ENCODE measurements at regions of chr12 and their contacts with region 1.

Region 1: GRCh38 chr12:53267999-53268647 is at the start of gene ESPL1:
- DNase-seq: peak; percentile 58
- ATAC-seq: peak; percentile 93
- H3K4me3 ChIP-seq: peak within 1 kb of the TSS; percentile 77
- H3K27ac ChIP-seq: peak within 1 kb of the TSS; percentile 89
- H3K4me1 ChIP-seq: peaks cover 14% of the 10 kb centered on the region
- H3K27me3 ChIP-seq: no peaks in the 10 kb centered on the region
- CTCF ChIP-seq: peak; percentile 26 to 37 (median 33); a peak in 4 of 6 replicates
- EP300 ChIP-seq: no peak
- POLR2A ChIP-seq: peak; percentile 75
- RAD21 ChIP-seq: peak; percentile 47
- polyA plus RNA-seq, gene ESPL1: 2.1 to 2.2 TPM

Region 2: DNA sequence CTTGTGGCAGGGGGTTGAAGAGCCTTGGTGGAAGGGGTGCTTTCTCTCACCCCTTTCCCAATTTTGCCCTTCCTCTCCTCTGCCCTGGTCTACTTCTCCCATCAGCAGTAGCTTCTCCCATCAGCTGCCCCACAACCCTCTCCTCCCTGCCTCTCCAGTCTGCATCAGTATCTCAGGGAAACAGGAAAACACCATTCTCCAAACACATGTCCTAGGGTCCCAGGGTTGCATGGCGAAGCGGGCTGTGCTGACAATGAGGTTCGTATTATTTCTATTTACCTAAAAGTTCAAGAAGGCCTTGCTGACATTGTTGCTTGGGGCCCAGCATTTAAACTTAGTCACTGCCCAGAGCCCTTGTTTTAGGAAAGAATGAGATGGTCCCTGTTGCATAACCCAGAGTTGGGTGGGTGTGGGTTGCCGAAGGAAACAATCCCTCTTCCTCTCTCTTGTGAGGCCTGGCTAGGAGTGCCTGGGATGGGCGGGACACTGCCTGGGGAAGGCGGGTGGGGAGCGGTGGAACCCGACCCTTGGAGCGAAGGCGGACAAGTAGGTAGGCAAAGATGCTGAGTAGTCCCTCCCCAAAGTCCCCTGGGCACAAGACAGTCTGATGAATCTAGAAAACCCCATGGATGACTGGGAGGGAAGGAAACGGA is 171.9 kb before region 1 on chr12:
- CTCF ChIA-PET with region 1: no interaction called
- POLR2A ChIA-PET with region 1: no interaction called
- RAD21 ChIA-PET with region 1: no interaction called
- SMC1A ChIA-PET with region 1: no interaction called
- in situ Hi-C with region 1: no loop called
- intact Hi-C with region 1: no loop called
- DNase-seq: no peak
- ATAC-seq: no peak
- H3K4me3 ChIP-seq: no peak overlapping the region
- H3K27ac ChIP-seq: no peak overlapping the region
- H3K4me1 ChIP-seq: peaks cover 9% of the 10 kb centered on the region
- H3K27me3 ChIP-seq: peaks cover 0 to 6% of the 10 kb centered on the region in 2 experiments; a peak in 3 of 4 replicates
- CTCF ChIP-seq: no peak
- EP300 ChIP-seq: no peak
- POLR2A ChIP-seq: no peak
- RAD21 ChIP-seq: no peak

Region 3: DNA sequence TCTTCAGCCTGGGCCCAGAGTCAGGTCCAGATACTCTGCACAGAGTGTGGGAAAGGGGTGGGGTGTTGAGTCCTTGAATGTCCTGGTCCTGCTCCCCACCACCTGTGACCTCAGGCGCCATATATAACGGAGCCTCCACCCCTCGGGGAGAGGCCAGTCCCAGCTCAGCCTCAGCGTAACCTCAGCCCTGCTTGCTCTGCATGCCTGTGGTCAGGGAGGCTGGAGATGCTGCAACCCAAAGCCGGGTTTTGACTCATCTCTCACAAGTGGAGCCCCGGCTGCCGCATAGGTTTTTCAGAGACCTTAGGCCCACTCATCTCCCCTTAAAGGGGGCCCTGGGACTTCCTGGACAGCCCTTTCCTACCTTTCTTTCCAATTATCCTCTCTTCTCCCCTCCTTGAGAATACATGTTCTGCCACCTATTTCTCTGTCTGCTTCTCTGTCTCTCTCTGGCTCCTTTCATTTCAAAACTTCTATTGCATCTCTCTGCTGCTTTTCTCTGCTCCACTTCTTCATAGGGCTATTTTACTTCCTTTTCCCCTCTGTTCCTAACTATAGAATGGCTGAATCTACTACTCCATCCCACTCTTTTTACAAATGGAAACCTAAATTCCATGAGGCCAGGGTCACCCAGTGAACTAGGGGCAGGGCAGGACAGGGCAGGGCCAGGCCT is 62.2 kb before region 1 on chr12:
- CTCF ChIA-PET with region 1: interaction called, 134 read pairs
- POLR2A ChIA-PET with region 1: interaction called, 16 read pairs
- RAD21 ChIA-PET with region 1: interaction called, 146 read pairs
- SMC1A ChIA-PET with region 1: interaction called, 155 read pairs
- in situ Hi-C with region 1: no loop called
- intact Hi-C with region 1: no loop called
- DNase-seq: peak; percentile 87
- ATAC-seq: peak; percentile 80
- H3K4me3 ChIP-seq: peak overlapping the region; percentile 90
- H3K27ac ChIP-seq: peak overlapping the region; percentile 86
- H3K4me1 ChIP-seq: peaks cover 54% of the 10 kb centered on the region
- H3K27me3 ChIP-seq: no peaks in the 10 kb centered on the region
- CTCF ChIP-seq: no peak
- EP300 ChIP-seq: peak; percentile 60 to 77; a peak in 2 of 4 replicates
- POLR2A ChIP-seq: peak; percentile 75
- RAD21 ChIP-seq: no peak

Region 4: DNA sequence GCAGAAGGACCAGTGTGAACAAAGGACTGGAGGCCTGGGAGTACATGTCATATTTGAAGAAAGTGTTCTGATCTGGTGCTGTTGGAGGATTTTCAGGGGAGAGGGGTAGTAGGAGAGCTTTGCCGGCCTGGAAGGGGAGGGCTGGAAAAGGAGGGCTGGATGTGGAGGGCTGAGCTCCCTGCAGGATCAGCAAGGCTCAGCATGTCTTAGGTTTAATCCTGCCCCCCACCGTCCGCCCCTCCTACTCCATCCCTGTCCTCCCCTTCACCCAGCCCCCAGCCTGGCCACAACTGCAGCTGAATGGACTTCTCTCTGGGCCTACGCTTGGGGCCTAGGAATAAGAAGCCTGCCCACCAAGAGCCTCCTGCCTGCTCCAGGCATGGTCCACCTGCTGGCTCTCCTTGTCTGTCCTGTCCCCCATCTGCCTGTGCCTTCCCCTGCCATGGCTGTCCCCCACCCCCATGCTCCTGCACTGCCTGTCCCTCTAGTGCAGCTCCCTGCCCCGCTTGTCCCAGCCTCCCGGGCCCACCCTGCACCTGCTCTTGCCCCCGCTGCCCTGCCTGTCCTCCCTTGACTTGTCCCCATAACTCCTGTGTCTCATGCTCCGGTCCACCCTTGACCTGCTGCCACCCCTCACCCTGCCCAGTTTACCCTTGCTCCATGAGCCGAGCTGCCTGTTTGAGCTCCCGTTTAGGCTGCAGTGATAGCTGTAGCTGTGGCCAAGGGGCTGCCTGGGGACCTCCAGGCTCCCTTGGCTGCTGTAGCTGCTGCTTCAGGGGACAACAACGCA is 26.3 kb before region 1 on chr12:
- CTCF ChIA-PET with region 1: interaction called, 5 read pairs
- POLR2A ChIA-PET with region 1: interaction called, 5 read pairs
- RAD21 ChIA-PET with region 1: interaction called, 4 read pairs
- SMC1A ChIA-PET with region 1: interaction called, 16 read pairs
- in situ Hi-C with region 1: no loop called
- intact Hi-C with region 1: no loop called
- DNase-seq: no peak
- ATAC-seq: peak; percentile 27; the same call in 2 of the 3 replicates
- H3K4me3 ChIP-seq: no peak overlapping the region
- H3K27ac ChIP-seq: no peak overlapping the region
- H3K4me1 ChIP-seq: peaks cover 6% of the 10 kb centered on the region
- H3K27me3 ChIP-seq: peaks cover 0 to 5% of the 10 kb centered on the region in 2 experiments; a peak in 2 of 4 replicates
- CTCF ChIP-seq: no peak
- EP300 ChIP-seq: no peak
- POLR2A ChIP-seq: no peak
- RAD21 ChIP-seq: no peak

Region 5: DNA sequence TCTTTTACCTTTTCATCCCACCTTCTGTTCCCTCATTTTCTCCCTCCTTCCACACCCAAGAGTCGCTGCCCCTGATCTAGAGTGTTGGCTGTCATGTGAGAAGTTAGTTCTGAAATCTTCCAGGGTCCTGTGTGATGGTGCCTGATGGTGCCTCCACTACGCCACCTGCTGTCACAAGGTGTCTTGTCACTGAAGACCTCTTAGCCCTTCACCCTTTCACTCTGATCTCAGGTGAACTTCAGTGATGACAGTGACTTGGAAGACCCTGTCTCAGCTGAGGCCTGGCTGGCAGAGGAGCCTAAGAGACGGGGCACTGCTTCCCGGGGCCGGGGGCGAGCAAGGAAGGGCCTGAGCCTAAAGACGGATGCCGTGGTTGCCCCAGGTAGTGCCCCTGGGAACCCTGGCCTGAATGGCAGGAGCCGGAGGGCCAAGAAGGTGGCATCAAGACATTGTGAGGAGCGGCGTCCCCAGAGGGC is 19.7 kb after region 1 on chr12:
- CTCF ChIA-PET with region 1: interaction called, 87 read pairs
- POLR2A ChIA-PET with region 1: no interaction called
- RAD21 ChIA-PET with region 1: interaction called, 5 read pairs
- SMC1A ChIA-PET with region 1: interaction called, 27 read pairs
- in situ Hi-C with region 1: no loop called
- intact Hi-C with region 1: no loop called
- DNase-seq: peak; percentile 17
- ATAC-seq: peak; percentile 99
- H3K4me3 ChIP-seq: no peak overlapping the region
- H3K27ac ChIP-seq: no peak overlapping the region
- H3K4me1 ChIP-seq: no peaks in the 10 kb centered on the region
- H3K27me3 ChIP-seq: no peaks in the 10 kb centered on the region
- CTCF ChIP-seq: peak; percentile 76 to 80 (median 78)
- EP300 ChIP-seq: no peak
- POLR2A ChIP-seq: no peak
- RAD21 ChIP-seq: peak; percentile 84

Region 6: DNA sequence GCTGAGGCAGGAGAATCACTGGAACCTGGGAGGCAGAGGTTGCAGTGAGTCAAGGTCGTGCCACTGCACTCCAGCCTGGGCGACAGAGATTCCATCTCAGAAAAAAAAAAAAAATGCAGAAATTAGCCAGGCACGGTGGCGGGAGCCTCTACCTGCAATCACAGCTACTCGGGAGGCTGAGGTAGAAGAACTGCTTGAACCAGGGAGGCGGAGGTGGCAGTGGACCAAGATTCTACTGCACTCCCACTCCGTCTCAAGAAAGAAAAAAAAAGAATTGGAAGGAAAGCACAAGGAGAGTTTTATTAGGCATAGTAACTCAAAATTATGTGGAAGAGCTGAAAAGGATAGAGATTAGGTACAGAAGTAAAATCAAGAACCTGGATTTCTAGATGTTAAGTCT is 134.7 kb after region 1 on chr12:
- CTCF ChIA-PET with region 1: no interaction called
- POLR2A ChIA-PET with region 1: no interaction called
- RAD21 ChIA-PET with region 1: no interaction called
- SMC1A ChIA-PET with region 1: no interaction called
- in situ Hi-C with region 1: no loop called
- intact Hi-C with region 1: no loop called
- DNase-seq: no peak
- ATAC-seq: no peak
- H3K4me3 ChIP-seq: no peak overlapping the region
- H3K27ac ChIP-seq: no peak overlapping the region
- H3K4me1 ChIP-seq: no peaks in the 10 kb centered on the region
- H3K27me3 ChIP-seq: no peaks in the 10 kb centered on the region
- CTCF ChIP-seq: no peak
- EP300 ChIP-seq: no peak
- POLR2A ChIP-seq: no peak
- RAD21 ChIP-seq: no peak

Region 7: DNA sequence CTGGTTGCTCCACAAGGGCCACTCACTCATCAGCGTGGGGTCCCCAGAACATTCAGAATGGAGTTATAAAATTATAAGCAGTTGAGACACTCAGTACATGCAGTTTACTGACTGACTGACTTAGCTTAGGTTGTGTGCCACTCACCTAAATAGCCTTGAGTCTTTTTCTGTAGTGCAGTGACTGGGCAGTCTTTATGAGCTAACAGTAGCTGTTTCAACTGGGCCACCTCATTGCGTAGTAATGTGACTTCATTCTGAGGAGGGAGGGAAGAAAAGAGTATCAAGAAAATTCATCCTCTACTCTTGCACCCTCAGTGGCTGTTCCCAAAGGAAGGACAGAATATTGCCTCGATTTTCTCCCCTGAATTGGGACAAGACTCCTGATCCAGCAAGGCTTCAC is 255.0 kb after region 1 on chr12:
- CTCF ChIA-PET with region 1: no interaction called
- POLR2A ChIA-PET with region 1: no interaction called
- RAD21 ChIA-PET with region 1: no interaction called
- SMC1A ChIA-PET with region 1: no interaction called
- in situ Hi-C with region 1: no loop called
- intact Hi-C with region 1: no loop called
- DNase-seq: no peak
- ATAC-seq: no peak
- H3K4me3 ChIP-seq: no peak overlapping the region
- H3K27ac ChIP-seq: no peak overlapping the region
- H3K4me1 ChIP-seq: no peaks in the 10 kb centered on the region
- H3K27me3 ChIP-seq: no peaks in the 10 kb centered on the region
- CTCF ChIP-seq: no peak
- EP300 ChIP-seq: no peak
- POLR2A ChIP-seq: no peak
- RAD21 ChIP-seq: no peak

Measured in GM12878 (cell line).